H1 (cell line): ENCODE measurements at regions of chr19 and their contacts with region 1.

Region 1: GRCh38 chr19:2236314-2237050 is at the starts of genes PLEKHJ1 and SF3A2:
- DNase-seq: peak; percentile 87 to 99
- H3K4me3 ChIP-seq: peak within 1 kb of the TSS; percentile 77 to 86 (median 80)
- H3K27ac ChIP-seq: peak within 1 kb of the TSS; percentile 93
- H3K4me1 ChIP-seq: peaks cover 0 to 24% (median 14%) of the 10 kb centered on the region in 4 experiments; a peak in 6 of 7 replicates
- H3K27me3 ChIP-seq: no peaks in the 10 kb centered on the region
- CTCF ChIP-seq: peak; percentile 93 to 100 (median 97)
- EP300 ChIP-seq: no peak
- POLR2A ChIP-seq: peak; percentile 77 to 90
- RAD21 ChIP-seq: peak; percentile 86 to 91
- total RNA-seq, gene PLEKHJ1: 135 TPM in 2 replicates
- total RNA-seq, gene SF3A2: 142 and 146 TPM in 2 replicates

Region 2: DNA sequence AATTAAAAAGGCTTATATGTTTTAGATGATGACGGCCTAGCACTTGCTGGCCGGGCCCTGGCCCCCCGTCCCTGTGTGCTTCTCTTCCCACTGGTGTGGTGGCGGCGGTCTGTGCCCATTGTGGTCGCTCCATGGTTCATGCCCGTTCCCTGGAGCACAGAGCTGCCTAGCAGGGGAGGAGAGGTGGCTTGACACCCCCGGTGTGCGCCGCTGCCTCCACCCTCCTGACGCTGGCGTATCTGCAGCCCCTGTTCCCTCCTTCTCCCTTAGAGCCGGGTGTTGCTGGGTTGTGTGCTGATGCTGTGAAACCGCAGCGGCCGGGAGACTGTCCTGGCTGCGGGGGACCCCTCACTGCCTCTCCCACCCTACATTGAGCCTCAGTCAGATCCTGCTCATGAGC is 43.6 kb before region 1 on chr19:
- CTCF ChIA-PET with region 1: no interaction called
- POLR2A ChIA-PET with region 1: no interaction called
- DNase-seq: no peak
- H3K4me3 ChIP-seq: no peak overlapping the region
- H3K27ac ChIP-seq: no peak overlapping the region
- H3K4me1 ChIP-seq: no peaks in the 10 kb centered on the region
- H3K27me3 ChIP-seq: no peaks in the 10 kb centered on the region
- CTCF ChIP-seq: no peak
- EP300 ChIP-seq: no peak
- POLR2A ChIP-seq: no peak
- RAD21 ChIP-seq: no peak

Region 3: GRCh38 chr19:2221918-2222317 is 14.6 kb before region 1 on chr19:
- CTCF ChIA-PET with region 1: interaction called, 7 read pairs
- POLR2A ChIA-PET with region 1: interaction called, 34 read pairs
- DNase-seq: no peak
- H3K4me3 ChIP-seq: no peak overlapping the region
- H3K27ac ChIP-seq: no peak overlapping the region
- H3K4me1 ChIP-seq: no peaks in the 10 kb centered on the region
- H3K27me3 ChIP-seq: no peaks in the 10 kb centered on the region
- CTCF ChIP-seq: peak in 1 of 3 experiments; percentile 3; a peak in 1 of 4 replicates
- EP300 ChIP-seq: no peak
- POLR2A ChIP-seq: no peak
- RAD21 ChIP-seq: peak in 1 of 2 experiments; percentile 15; a peak in 1 of 4 replicates

Region 4: GRCh38 chr19:2253106-2254053 is 16.9 kb after region 1 on chr19:
- CTCF ChIA-PET with region 1: interaction called, 35 read pairs
- POLR2A ChIA-PET with region 1: interaction called, 206 read pairs
- DNase-seq: peak in 1 of 2 experiments; percentile 84
- H3K4me3 ChIP-seq: peak overlapping the region; percentile 35 to 65 (median 47)
- H3K27ac ChIP-seq: no peak overlapping the region
- H3K4me1 ChIP-seq: peaks cover 0 to 4% (median 2%) of the 10 kb centered on the region in 4 experiments; a peak in 5 of 7 replicates
- H3K27me3 ChIP-seq: peaks cover 0 to 23% (median 12%) of the 10 kb centered on the region in 4 experiments; a peak in 6 of 7 replicates
- CTCF ChIP-seq: peak; percentile 50 to 59 (median 54)
- EP300 ChIP-seq: no peak
- POLR2A ChIP-seq: no peak
- RAD21 ChIP-seq: peak; percentile 30 to 50; a peak in 3 of 4 replicates

Region 5: GRCh38 chr19:2261438-2262172 is 25.1 kb after region 1 on chr19:
- CTCF ChIA-PET with region 1: interaction called, 19 read pairs
- POLR2A ChIA-PET with region 1: interaction called, 206 read pairs
- DNase-seq: peak in 1 of 2 experiments; percentile 78
- H3K4me3 ChIP-seq: no peak overlapping the region
- H3K27ac ChIP-seq: no peak overlapping the region
- H3K4me1 ChIP-seq: 0 out of 7 replicates have a peak, but pooled peaks cover 0 to 3% (median 0%) of the 10 kb centered on the region in 4 experiments
- H3K27me3 ChIP-seq: no peaks in the 10 kb centered on the region; a peak in 1 of 7 replicates
- CTCF ChIP-seq: peak; percentile 56 to 73 (median 70)
- EP300 ChIP-seq: no peak
- POLR2A ChIP-seq: no peak
- RAD21 ChIP-seq: peak; percentile 40 to 48

Region 6: DNA sequence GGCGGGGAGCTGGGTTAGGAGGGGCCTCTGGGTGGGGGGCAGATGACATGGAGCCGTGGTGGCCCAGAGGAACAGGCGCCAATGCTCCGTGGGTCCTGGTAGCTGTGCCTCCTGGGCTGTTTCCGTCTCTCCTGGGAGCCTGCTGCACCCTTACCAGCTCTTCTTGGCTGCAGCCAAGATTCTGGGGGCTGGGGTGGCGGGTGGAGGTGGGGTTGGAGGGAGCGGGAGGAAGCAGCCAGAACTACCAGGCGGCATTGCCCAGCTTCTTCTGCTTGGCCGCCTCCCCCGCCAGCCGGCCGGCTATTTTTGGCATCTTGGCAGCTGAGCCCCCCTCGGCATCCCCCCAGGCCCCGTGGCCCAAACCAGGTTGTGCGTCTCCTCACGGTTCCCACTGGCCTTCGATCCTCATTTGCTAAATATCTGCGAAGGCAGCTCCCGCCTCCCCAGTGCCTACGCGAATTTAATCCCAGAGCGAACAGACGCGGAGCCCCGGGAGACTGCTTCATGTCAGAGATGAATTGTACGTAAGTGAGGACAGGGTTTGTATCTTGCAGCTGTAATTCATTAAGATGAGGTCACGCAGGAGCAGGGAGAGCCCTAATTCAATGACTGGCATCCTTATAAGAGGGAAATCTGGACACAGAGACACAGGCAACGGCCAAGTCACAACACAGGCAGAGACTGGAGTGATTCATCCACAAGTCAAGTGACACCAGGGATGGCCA is 58.3 kb after region 1 on chr19:
- CTCF ChIA-PET with region 1: no interaction called
- POLR2A ChIA-PET with region 1: no interaction called
- DNase-seq: no peak
- H3K4me3 ChIP-seq: no peak overlapping the region
- H3K27ac ChIP-seq: no peak overlapping the region
- H3K4me1 ChIP-seq: peaks cover 0 to 18% (median 10%) of the 10 kb centered on the region in 4 experiments; a peak in 5 of 7 replicates
- H3K27me3 ChIP-seq: peaks cover 28 to 37% (median 34%) of the 10 kb centered on the region in 4 experiments
- CTCF ChIP-seq: no peak
- EP300 ChIP-seq: no peak
- POLR2A ChIP-seq: no peak
- RAD21 ChIP-seq: no peak